Dorsolateral prefrontal cortex (tissue), 120 donors: ENCODE measurements at regions of chr5 and their contacts with region 1.

Region 1: DNA sequence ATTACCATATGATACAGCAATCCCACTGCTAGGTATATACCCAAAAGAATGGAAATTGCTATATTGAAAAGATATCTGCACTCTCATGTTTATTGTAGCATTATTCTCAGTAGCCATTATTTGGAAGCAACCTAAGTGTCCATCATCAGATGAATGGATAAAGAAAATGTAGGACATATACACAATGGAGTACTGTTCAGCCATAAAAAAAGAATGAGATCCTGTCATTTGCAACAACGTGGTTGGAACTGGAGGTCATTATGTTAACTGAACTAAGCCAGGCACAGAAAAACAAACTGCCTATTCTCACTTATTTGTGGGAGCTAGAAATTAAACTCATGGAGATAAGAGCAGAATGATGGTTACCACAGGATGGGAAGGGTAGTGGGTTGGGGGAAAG is 63.1 kb upstream of the TTC23L start:
- DNase-seq: no peak
- H3K4me3 ChIP-seq: no peak overlapping the region
- H3K27ac ChIP-seq: peak overlapping the region in 43 of 59 donors; percentile 4 to 87 (median 70)
- H3K27me3 ChIP-seq: no peaks in the 10 kb centered on the region
- CTCF ChIP-seq: no peak

Region 2: GRCh38 chr5:34802834-34803563 is 27.1 kb after region 1 on chr5:
- intact Hi-C with region 1: loop called in 1 of 2 experiments (anchors 1 kb)
- DNase-seq: no peak
- H3K4me3 ChIP-seq: no peak overlapping the region
- H3K27ac ChIP-seq: no peak overlapping the region
- H3K27me3 ChIP-seq: no peaks in the 10 kb centered on the region
- CTCF ChIP-seq: no peak